ENCODE measurements at regions of chr9 and their contacts with region 1.

Region 1: DNA sequence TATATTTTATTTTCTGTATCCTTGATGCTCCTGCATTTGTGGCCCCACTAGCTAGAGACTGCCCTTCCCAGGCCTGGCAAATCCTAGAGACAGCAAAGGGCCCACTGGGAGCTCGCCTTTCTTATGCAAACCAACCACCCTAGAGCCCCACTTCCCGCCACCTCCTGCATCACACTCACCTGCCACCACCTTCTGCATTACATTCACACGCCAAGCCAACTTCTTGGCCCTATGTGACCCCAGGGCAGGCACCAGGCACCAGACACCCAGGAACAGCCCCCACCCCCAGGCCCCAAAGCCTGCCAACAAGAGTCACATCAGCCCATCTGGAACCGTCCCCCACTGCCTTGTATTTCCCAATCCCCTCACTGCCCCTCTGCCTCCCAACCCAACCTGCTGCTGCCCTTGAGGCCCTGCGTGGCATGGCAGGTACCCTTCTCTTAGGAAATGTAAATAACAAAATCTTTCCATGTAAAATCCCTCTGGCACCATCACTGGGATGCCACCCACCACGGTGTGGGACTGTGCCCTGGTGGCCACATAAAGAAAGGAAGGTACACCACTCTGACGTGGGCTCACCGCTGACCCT is 22.0 kb downstream of the ROR2 start:
- DNase-seq: no peak
- H3K4me3 ChIP-seq: no peak overlapping the region
- H3K27ac ChIP-seq: no peak overlapping the region
- H3K4me1 ChIP-seq: no peaks in the 10 kb centered on the region
- H3K27me3 ChIP-seq: no peaks in the 10 kb centered on the region
- CTCF ChIP-seq: no peak
- POLR2A ChIP-seq: no peak

Region 2: DNA sequence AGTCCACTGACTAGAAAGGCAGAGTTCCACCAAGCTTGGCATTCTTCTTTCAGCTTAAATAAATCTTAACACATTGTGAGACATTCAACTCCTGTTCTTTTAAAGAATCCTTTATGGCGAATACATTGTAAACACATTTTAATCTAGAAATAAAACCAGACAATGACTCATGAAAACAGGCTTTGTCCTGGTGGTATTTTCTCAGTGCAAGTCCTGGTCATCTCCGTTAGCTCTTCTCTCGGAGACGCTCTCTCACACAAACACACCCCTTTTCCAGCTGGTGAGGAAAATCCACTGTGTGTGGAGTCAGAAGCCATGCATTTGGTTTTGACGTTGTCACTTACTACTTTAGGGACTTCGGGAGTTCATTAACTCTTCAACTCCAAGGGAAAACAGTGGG is 706.7 kb before region 1 on chr9:
- intact Hi-C with region 1: no loop called
- DNase-seq: no peak
- H3K4me3 ChIP-seq: no peak overlapping the region
- H3K27ac ChIP-seq: no peak overlapping the region
- H3K4me1 ChIP-seq: no peaks in the 10 kb centered on the region
- H3K27me3 ChIP-seq: no peaks in the 10 kb centered on the region
- CTCF ChIP-seq: no peak
- POLR2A ChIP-seq: no peak

Region 3: DNA sequence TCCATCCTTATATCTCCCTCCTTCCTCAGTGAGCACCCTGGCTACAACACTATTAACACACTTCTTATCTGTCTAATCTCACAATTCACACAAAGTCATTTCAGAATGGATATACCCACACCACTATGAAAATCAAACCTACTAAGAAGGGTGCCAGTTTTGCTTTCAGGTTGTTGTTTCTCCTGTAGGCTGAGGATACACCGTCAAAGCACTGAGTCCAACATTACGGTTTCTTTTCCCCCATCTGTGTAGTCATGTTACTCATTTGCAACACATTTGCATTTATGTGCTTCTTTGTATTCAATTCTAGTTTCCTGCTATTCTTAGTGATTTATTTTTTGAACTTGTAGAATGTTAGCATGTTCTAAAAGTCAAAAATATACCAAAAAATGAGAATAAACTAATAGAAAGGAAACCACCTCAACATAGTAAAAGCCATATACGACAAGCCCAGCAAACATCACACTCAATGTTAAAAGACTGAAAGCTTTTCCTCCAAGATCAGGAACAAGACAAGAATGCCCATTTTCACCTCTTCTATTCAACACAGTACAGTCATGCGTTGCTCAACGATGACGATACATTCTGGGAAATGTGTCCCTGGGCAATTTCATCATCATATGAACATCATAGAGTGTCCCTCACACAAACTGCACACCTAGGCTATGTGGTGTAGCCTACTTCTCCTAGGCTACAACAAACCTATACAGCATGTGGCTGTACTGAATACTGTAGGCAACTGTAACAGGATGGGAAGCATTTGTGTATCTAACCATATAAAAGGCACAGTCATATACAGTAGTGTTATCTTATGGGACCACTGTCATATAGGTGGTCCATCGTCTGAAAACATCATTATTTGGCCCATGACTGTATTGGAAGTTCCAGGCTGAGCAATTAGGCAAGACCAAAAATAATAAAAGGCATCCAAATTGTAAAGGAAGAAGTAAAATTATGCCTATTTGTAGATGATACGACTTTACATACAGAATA is 15.8 kb after region 1 on chr9:
- intact Hi-C with region 1: loop called (anchors 1 kb)
- DNase-seq: no peak
- H3K4me3 ChIP-seq: no peak overlapping the region
- H3K27ac ChIP-seq: no peak overlapping the region
- H3K4me1 ChIP-seq: peaks cover 0 to 12% of the 10 kb centered on the region in 2 donors
- H3K27me3 ChIP-seq: no peaks in the 10 kb centered on the region
- CTCF ChIP-seq: no peak
- POLR2A ChIP-seq: no peak

Measured in breast epithelium (tissue), 4 donors.